Transverse colon (tissue), 4 donors: ENCODE measurements at regions of chr4 and their contacts with region 1.

Region 1: GRCh38 chr4:107913281-107913899 is 18.0 kb upstream of the CYP2U1 start:
- DNase-seq: peak; percentile 11
- H3K4me3 ChIP-seq: no peak overlapping the region
- H3K27ac ChIP-seq: no peak overlapping the region
- H3K4me1 ChIP-seq: no peaks in the 10 kb centered on the region
- H3K27me3 ChIP-seq: no peaks in the 10 kb centered on the region
- CTCF ChIP-seq: peak; percentile 74 to 87 (median 82)
- EP300 ChIP-seq: no peak
- POLR2A ChIP-seq: no peak

Region 2: DNA sequence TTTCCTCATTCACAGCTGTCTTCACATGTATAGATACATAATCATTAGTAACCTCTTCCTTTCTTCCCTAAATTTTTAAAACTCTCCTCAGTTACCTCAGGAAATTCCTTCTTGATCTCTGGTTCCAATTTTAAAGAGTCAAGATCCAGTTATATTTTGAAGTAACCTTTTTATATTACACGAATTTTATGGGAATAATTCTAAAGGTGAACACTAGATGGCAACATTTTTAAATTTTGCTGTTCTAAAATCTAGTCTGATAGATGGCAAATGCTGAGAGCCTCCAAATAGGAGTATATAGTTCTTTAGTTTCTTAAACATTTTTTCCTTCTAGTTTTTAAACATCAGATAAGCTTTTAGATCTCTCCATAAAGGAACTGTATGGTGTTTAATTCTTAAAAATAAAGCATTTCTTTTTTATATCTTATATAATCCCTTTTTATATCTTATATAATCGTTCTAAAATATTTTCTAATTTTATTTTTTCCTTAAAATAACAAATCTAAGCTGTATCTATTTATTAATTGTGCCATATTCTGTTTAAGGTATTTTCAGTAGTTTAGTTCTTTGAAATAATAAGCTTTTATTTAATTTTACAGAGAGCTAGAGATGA is 155.4 kb before region 1 on chr4:
- in situ Hi-C with region 1: loop called in 3 of 4 experiments (anchors 5 to 10 kb)
- intact Hi-C with region 1: loop called (anchors 2 kb)
- DNase-seq: no peak
- H3K4me3 ChIP-seq: no peak overlapping the region
- H3K27ac ChIP-seq: no peak overlapping the region
- H3K4me1 ChIP-seq: peaks cover 0 to 7% (median 0%) of the 10 kb centered on the region in 4 donors
- H3K27me3 ChIP-seq: no peaks in the 10 kb centered on the region
- CTCF ChIP-seq: peak; percentile 56 to 65 (median 59)
- EP300 ChIP-seq: no peak
- POLR2A ChIP-seq: no peak